Mammary epithelial cell (primary cell): ENCODE measurements at regions of chr10 and their contacts with region 1.

Region 1: GRCh38 chr10:19788075-19788686 is 28.1 kb upstream of the PLXDC2 start:
- DNase-seq: peak; percentile 20
- H3K4me3 ChIP-seq: no peak overlapping the region
- H3K27ac ChIP-seq: no peak overlapping the region
- H3K4me1 ChIP-seq: no peaks in the 10 kb centered on the region
- H3K27me3 ChIP-seq: no peaks in the 10 kb centered on the region
- CTCF ChIP-seq: peak; percentile 89 to 99

Region 2: GRCh38 chr10:18689498-18689897 is 1098.7 kb before region 1 on chr10:
- CTCF ChIA-PET with region 1: no interaction called
- dilution Hi-C with region 1: no loop called
- in situ Hi-C with region 1: loop called (anchors 25 kb)
- intact Hi-C with region 1: no loop called
- DNase-seq: no peak
- H3K4me3 ChIP-seq: no peak overlapping the region
- H3K27ac ChIP-seq: no peak overlapping the region
- H3K4me1 ChIP-seq: no peaks in the 10 kb centered on the region
- H3K27me3 ChIP-seq: no peaks in the 10 kb centered on the region
- CTCF ChIP-seq: peak; percentile 39 to 56

Region 3: GRCh38 chr10:19412531-19412930 is 375.6 kb before region 1 on chr10:
- CTCF ChIA-PET with region 1: interaction called, 19 read pairs
- dilution Hi-C with region 1: no loop called
- in situ Hi-C with region 1: loop called in 1 of 2 experiments (anchors 25 kb)
- intact Hi-C with region 1: no loop called
- DNase-seq: peak; percentile 19
- H3K4me3 ChIP-seq: no peak overlapping the region
- H3K27ac ChIP-seq: no peak overlapping the region
- H3K4me1 ChIP-seq: no peaks in the 10 kb centered on the region
- H3K27me3 ChIP-seq: no peaks in the 10 kb centered on the region
- CTCF ChIP-seq: peak; percentile 42 to 59

Region 4: GRCh38 chr10:19620811-19621210 is 167.4 kb before region 1 on chr10:
- CTCF ChIA-PET with region 1: no interaction called
- dilution Hi-C with region 1: no loop called
- in situ Hi-C with region 1: no loop called
- intact Hi-C with region 1: loop called (anchors 5 kb)
- DNase-seq: no peak
- H3K4me3 ChIP-seq: no peak overlapping the region
- H3K27ac ChIP-seq: no peak overlapping the region
- H3K4me1 ChIP-seq: no peaks in the 10 kb centered on the region
- H3K27me3 ChIP-seq: no peaks in the 10 kb centered on the region
- CTCF ChIP-seq: no peak

Region 5: GRCh38 chr10:19659920-19660655 is 128.1 kb before region 1 on chr10:
- CTCF ChIA-PET with region 1: no interaction called
- dilution Hi-C with region 1: no loop called
- in situ Hi-C with region 1: no loop called
- intact Hi-C with region 1: loop called (anchors 5 kb)
- DNase-seq: peak; percentile 41
- H3K4me3 ChIP-seq: no peak overlapping the region
- H3K27ac ChIP-seq: no peak overlapping the region
- H3K4me1 ChIP-seq: peaks cover 8% of the 10 kb centered on the region
- H3K27me3 ChIP-seq: no peaks in the 10 kb centered on the region
- CTCF ChIP-seq: no peak

Region 6: DNA sequence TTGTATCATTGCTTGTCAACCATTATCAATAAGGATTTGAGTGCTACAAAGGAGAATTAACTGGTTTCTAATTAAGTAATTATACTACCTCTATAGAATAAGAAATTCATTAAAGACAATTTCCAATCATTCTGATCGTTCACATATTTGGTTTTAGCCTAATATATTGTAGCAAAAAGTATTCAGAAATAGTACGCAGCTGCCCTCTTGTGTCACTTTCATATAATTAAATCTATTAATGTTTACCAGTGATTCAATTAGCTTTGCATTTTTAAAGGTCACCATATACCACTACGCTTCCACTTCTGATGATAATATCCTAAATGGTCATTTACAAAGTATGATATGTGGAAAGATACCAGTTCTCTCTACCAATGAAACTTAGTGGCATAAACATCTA is 980.7 kb after region 1 on chr10:
- CTCF ChIA-PET with region 1: no interaction called
- dilution Hi-C with region 1: no loop called
- in situ Hi-C with region 1: no loop called
- intact Hi-C with region 1: loop called (anchors 5 kb)
- DNase-seq: peak; percentile 11
- H3K4me3 ChIP-seq: no peak overlapping the region
- H3K27ac ChIP-seq: no peak overlapping the region
- H3K4me1 ChIP-seq: peaks cover 6% of the 10 kb centered on the region
- H3K27me3 ChIP-seq: peaks cover under 1% of the 10 kb centered on the region
- CTCF ChIP-seq: peak; percentile 28 to 48